CD4-positive, alpha-beta memory T cell (primary cell): ENCODE measurements at regions of chr10 and their contacts with region 1.

Region 1: DNA sequence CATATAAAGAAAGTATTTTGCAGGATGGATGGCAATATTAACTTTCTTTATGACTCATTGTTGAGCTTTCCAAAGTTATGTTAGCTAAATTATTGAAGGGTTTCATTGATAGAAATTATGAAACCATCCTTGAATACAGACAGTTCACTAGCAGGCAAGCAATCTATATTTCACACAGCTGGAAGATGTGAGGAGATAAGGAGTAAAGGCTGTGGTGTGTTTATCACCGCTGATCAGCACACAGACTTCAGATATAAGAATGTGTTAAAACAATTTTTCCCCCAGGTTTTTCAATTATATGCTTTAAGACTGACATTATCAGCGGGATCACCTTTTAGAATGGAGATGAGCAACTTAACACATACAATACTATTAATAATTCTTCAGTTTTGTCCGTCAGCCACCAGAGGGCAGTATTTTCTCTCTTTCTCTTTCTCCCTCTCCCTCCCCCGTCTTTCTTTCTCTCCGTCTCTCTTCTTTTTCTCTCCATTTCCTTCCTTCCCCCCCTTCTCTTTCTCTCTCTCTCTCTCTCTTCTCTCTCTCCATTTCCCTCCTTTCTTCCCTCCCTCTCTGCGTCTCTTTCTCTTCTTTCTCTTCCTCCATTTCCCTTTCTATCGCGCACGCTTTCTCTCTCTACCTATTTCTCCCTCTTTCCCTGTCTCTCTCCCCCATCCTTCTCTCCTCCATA is 62.9 kb upstream of the FAM171A1 start:
- DNase-seq: peak in 4 of 5 donors; percentile 48 to 55 (median 54)
- H3K4me3 ChIP-seq: no peak overlapping the region
- H3K4me3 Mint-ChIP-seq: peak overlapping the region; percentile 77 to 87 (median 85)
- H3K27ac ChIP-seq: no peak overlapping the region
- H3K27ac Mint-ChIP-seq: peak overlapping the region in 2 of 7 donors; percentile 39 to 67
- H3K4me1 ChIP-seq: no peaks in the 10 kb centered on the region
- H3K4me1 Mint-ChIP-seq: peaks cover 3 to 11% (median 6%) of the 10 kb centered on the region in 4 donors
- H3K27me3 ChIP-seq: no peaks in the 10 kb centered on the region
- H3K27me3 Mint-ChIP-seq: peaks cover 14 to 23% of the 10 kb centered on the region in 2 donors

Region 2: GRCh38 chr10:15419279-15419874 is 14.6 kb before region 1 on chr10:
- CTCF ChIA-PET with region 1: interaction called, 14 read pairs
- POLR2A ChIA-PET with region 1: no interaction called
- intact Hi-C with region 1: no loop called
- DNase-seq: peak in 4 of 5 donors; percentile 13 to 36 (median 26)
- H3K4me3 ChIP-seq: no peak overlapping the region
- H3K4me3 Mint-ChIP-seq: no peak overlapping the region
- H3K27ac ChIP-seq: no peak overlapping the region
- H3K27ac Mint-ChIP-seq: no peak overlapping the region
- H3K4me1 ChIP-seq: no peaks in the 10 kb centered on the region
- H3K4me1 Mint-ChIP-seq: peaks cover 0 to 1% (median 0%) of the 10 kb centered on the region in 4 donors
- H3K27me3 ChIP-seq: no peaks in the 10 kb centered on the region
- H3K27me3 Mint-ChIP-seq: peaks cover 2 to 3% of the 10 kb centered on the region in 2 donors

Region 3: GRCh38 chr10:15744217-15744865 is 310.3 kb after region 1 on chr10:
- CTCF ChIA-PET with region 1: interaction called, 5 read pairs
- POLR2A ChIA-PET with region 1: no interaction called
- intact Hi-C with region 1: loop called (anchors 1 kb)
- DNase-seq: peak in 3 of 5 donors; percentile 4 to 6 (median 5)
- H3K4me3 ChIP-seq: no peak overlapping the region
- H3K4me3 Mint-ChIP-seq: no peak overlapping the region
- H3K27ac ChIP-seq: no peak overlapping the region
- H3K27ac Mint-ChIP-seq: no peak overlapping the region
- H3K4me1 ChIP-seq: no peaks in the 10 kb centered on the region
- H3K4me1 Mint-ChIP-seq: no peaks in the 10 kb centered on the region
- H3K27me3 ChIP-seq: peaks cover 3% of the 10 kb centered on the region
- H3K27me3 Mint-ChIP-seq: peaks cover 3 to 11% of the 10 kb centered on the region in 2 donors

Region 4: DNA sequence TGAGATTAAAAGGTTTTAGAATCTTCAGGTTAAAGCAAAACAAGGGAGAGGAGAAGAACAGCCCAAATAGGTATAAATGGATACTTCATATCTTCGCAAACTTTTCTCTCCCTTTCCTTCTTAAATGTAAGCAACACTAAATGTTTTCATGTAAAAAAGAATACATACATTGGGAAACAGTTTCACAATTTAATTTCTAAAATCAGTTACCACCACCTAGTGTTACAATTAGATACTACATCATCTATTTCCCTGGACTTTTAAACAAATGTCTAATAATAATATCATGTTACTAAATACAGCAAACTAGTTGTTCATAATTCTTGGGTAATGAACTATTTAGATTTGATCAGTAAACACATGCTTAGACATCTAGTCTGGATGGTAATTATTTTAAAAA is 390.5 kb after region 1 on chr10:
- CTCF ChIA-PET with region 1: no interaction called
- POLR2A ChIA-PET with region 1: no interaction called
- intact Hi-C with region 1: loop called (anchors 10 kb)
- DNase-seq: no peak
- H3K4me3 ChIP-seq: no peak overlapping the region
- H3K4me3 Mint-ChIP-seq: no peak overlapping the region
- H3K27ac ChIP-seq: no peak overlapping the region
- H3K27ac Mint-ChIP-seq: no peak overlapping the region
- H3K4me1 ChIP-seq: no peaks in the 10 kb centered on the region
- H3K4me1 Mint-ChIP-seq: peaks cover 0 to 7% (median 1%) of the 10 kb centered on the region in 4 donors
- H3K27me3 ChIP-seq: no peaks in the 10 kb centered on the region
- H3K27me3 Mint-ChIP-seq: no peaks in the 10 kb centered on the region